Activated naive CD4-positive, alpha-beta T cell treated with anti-CD3 and anti-CD28 coated beads for 36 hours (primary cell): ENCODE measurements at regions of chr6 and their contacts with region 1.

Region 1: DNA sequence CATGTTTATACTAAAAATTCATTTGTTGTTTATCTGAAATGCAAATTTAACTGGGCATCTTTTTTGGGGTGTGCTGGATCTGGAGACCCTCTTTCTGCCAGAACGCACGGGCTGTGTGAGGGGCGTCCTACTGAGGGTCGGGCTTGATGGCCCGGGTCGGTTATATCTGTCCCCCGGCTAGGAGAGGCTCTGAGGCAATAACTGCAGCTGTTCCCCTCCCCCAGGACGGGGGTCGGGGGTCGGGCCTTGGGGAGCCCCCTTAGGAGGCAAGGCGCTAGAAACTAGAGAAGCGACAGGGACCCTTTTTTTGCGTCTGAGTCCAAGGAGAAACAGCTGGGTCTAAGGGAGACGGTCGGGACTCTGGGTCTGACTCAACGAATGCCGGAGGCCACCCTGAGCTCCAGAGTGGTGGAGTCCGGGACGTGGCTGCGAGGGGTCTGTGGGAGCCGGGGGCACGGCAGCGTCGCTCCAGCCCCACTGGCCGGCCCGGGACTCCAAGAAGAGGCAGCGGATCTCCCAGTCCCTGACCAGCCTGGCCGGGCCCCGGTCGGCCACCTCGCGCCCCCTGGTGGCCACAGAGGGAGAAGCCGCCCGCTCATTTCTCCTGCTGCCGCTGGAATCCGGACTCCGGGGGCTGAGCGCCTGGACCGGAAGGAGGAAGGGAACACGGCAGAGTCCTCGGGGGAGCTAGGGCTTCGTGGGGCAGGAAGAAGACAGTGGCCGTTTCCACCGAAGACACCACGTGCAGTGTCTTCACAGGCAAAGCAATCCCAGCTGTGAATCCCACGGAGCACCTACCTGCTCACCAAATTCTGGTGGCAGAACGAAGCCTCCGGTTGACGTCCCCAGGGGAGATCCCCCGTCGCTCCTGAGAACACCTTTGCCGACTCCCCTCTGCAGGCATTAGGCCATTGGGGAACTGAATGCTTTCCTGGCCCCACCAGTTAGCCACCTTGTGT is 24.0 kb upstream of the SCML4 start:
- DNase-seq: peak; percentile 86
- H3K4me3 Mint-ChIP-seq: peak overlapping the region; percentile 76
- H3K27ac Mint-ChIP-seq: peak overlapping the region; percentile 67
- H3K4me1 Mint-ChIP-seq: peaks cover 21% of the 10 kb centered on the region
- H3K27me3 Mint-ChIP-seq: no peaks in the 10 kb centered on the region

Region 2: DNA sequence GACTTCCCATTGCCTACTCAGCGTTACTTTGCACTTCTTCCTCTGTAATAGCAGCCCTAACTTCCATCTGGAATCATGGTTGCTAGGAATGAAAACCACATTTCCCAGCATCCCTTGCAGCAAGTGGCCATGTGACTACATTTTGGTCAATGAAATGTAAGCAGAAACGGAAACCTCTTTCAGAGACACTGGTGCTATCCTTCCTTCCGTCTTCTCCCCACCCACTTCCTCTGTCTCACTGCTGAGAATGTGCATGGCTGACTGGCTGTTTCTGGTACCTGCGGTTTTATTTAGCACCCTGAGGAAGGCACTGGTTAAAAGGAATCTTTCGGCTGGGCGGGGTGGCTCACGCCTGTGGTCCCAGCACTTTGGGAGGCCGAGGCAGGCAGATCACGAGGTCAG is 131.4 kb before region 1 on chr6:
- CTCF ChIA-PET with region 1: interaction called, 15 read pairs
- intact Hi-C with region 1: loop called (anchors 1 kb)
- DNase-seq: peak; percentile 89
- H3K4me3 Mint-ChIP-seq: peak overlapping the region; percentile 71
- H3K27ac Mint-ChIP-seq: peak overlapping the region; percentile 93
- H3K4me1 Mint-ChIP-seq: peaks cover 65% of the 10 kb centered on the region
- H3K27me3 Mint-ChIP-seq: no peaks in the 10 kb centered on the region

Region 3: DNA sequence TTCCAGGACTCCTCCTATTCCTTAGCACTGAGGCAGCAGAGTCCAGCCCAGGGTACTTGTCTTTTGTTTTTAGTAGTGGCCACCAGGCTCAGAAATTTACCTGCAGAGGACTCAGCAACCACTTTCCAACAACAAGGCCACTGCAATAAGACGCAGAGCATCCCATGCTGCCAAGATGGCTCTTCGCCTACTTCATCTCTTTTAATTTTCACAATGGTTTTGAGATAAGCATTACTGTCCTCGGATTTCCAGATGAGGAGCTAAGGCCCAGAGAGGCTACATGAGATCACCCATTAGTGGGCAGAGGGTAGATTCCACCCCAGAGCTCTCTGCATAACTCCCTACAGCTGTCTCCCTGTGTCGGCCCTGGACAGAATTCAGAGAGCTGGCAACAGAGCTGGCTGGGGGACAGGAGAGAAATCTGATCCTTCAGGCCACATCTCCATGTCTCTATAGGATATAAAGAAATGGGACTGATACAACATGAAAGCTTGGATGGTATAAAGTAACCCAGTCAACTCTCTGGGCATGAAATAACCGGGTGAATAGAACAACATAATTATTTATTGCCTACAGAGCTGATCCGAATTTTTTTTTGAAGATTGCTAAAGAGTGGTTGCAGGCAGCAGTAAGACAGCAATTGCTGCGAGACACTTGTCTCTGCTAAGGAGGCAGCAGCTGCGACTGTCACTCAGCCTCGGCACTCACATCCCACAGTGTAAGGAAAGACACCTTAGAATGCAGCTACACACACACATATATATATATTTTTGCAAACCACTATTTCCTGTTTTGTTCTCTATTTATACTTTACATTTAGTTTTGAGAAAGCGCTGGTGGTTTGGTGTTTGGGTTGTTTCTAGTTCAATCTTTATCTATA is 61.2 kb before region 1 on chr6:
- CTCF ChIA-PET with region 1: interaction called, 33 read pairs
- intact Hi-C with region 1: no loop called
- DNase-seq: peak; percentile 56
- H3K4me3 Mint-ChIP-seq: peak overlapping the region; percentile 57
- H3K27ac Mint-ChIP-seq: peak overlapping the region; percentile 8
- H3K4me1 Mint-ChIP-seq: peaks cover 79% of the 10 kb centered on the region
- H3K27me3 Mint-ChIP-seq: no peaks in the 10 kb centered on the region

Region 4: GRCh38 chr6:107800564-107801164 is 47.5 kb before region 1 on chr6:
- CTCF ChIA-PET with region 1: interaction called, 28 read pairs
- intact Hi-C with region 1: loop called (anchors 1 kb)
- DNase-seq: no peak
- H3K4me3 Mint-ChIP-seq: no peak overlapping the region
- H3K27ac Mint-ChIP-seq: peak overlapping the region; percentile 1
- H3K4me1 Mint-ChIP-seq: peaks cover 66% of the 10 kb centered on the region
- H3K27me3 Mint-ChIP-seq: no peaks in the 10 kb centered on the region

Region 5: DNA sequence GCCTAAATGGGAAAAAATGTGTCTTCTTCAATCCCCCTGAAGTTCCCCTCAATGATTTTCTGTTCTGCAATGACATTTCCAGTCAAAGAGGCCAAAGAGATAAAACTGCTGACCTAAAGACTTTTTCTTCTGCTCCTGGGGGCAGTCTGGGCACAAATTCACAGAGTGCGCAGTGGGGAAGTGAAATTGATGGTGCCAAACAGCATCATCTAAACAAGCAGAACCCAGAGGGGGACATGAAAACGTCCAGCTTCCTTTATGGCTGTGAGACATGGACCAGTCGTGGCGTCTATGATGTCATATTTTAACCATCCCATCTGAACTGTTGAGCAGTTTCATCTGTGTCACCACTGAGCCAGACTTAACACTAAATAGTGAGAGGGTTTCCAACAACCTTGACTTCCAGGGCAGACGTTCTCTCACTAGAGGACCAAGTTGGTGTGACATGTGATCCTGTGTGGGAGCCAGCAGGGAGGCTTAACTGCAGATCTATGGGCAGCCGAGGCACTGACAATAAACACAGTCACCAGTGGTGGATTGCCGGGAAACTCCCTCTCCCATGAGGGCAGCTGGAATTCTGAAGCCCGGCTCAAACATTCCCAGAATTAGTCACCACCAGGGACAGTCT is 36.4 kb before region 1 on chr6:
- CTCF ChIA-PET with region 1: interaction called, 28 read pairs
- intact Hi-C with region 1: no loop called
- DNase-seq: peak; percentile 38
- H3K4me3 Mint-ChIP-seq: no peak overlapping the region
- H3K27ac Mint-ChIP-seq: peak overlapping the region; percentile 57
- H3K4me1 Mint-ChIP-seq: peaks cover 74% of the 10 kb centered on the region
- H3K27me3 Mint-ChIP-seq: no peaks in the 10 kb centered on the region

Region 6: DNA sequence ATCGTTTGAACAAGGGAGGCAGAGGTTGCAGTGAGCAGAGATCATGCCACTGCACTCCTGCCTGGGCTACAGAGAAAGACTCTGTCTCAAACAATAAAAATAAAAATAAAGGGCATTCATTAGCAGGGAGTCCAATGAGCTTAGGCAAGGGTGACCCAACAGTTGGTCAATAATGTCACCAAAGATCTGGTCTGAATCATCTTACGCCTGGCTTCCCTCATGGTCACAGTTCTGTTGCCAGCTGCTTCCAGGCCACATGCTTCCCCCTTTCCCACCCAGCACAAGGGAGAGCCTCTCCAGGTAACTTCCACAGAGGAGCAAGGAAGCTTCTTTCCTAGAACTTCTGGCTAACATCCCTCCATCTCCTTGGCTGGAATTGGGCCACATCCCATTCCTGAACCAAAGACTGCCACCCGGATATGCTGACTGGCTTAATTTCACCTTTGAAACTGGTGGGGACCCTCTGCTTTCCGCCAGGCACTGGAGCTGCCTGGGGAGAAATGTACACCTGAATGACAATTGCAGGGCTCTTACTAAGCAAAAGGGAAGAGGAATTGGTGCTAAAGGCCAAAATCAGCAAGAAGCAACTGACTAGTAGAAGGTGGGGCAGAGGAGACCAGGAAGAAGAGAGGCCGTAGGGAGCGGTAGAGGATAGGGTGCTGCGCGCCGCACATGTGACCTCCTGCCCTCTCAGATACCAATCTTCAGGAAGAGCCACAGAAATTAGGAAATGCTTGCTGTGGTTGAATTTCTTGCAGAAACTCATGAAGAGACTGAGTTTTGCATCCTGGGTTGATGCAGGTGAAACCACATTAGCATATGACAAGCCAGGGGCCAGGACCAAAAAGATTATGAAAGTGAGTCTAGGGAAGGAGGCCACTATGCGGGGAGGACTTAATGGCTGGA is 15.7 kb before region 1 on chr6:
- CTCF ChIA-PET with region 1: interaction called, 73 read pairs
- intact Hi-C with region 1: no loop called
- DNase-seq: peak; percentile 38
- H3K4me3 Mint-ChIP-seq: no peak overlapping the region
- H3K27ac Mint-ChIP-seq: no peak overlapping the region
- H3K4me1 Mint-ChIP-seq: peaks cover 30% of the 10 kb centered on the region
- H3K27me3 Mint-ChIP-seq: no peaks in the 10 kb centered on the region